HCT116 (cell line): ENCODE measurements at regions of chr11 and their contacts with region 1.

Region 1: DNA sequence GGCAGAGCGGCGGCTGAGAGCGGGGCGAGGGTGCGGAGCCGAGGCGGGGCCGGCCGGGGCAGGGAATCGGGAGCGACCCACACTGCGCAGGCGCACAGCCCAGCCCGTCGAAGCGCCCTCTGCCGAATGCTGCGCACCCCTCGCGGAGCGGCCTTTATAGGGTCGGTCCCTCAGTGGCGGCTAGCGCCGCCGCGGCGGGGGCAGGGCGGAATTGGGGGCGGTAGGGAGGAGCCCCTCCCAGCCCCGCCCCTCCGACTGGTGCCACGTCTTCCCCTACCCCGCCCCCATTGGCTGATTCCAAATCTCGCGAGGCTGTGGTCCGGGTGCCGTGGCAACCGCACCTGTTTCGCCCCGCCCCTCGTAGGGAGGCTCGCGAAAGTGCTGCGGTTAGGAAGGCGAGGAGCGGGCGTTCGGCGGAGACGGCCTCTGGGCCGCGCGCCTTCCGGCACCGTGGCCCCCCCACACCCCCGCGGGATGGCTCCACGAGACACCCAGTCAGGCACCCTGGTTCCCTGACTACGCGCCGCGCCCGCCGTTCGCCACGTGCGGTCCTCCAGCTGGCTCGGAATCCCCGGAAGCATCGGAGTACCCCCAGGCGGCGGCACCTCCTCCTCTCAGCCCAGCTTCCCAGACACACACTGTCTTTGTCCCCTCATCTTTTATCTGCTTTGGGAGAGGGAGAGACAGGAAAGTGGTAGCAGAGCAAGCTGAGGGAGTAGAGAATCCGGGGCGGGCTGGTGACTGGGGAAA is at the start of gene EHD1:
- DNase-seq: peak; percentile 92
- ATAC-seq: peak; percentile 88
- H3K4me3 ChIP-seq: peak within 1 kb of the TSS; percentile 95 to 99
- H3K27ac ChIP-seq: peak within 1 kb of the TSS; percentile 84
- H3K4me1 ChIP-seq: peaks cover 22 to 33% of the 10 kb centered on the region in 2 experiments
- H3K27me3 ChIP-seq: no peaks in the 10 kb centered on the region
- CTCF ChIP-seq: peak; percentile 34 to 52 (median 36); a peak in 5 of 6 replicates
- POLR2A ChIP-seq: peak; percentile 89
- RAD21 ChIP-seq: no peak; the same call in none of the 2 replicates
- total RNA-seq, gene EHD1: 48.1 TPM

Region 2: GRCh38 chr11:64854534-64855429 is 23.9 kb before region 1 on chr11:
- CTCF ChIA-PET with region 1: no interaction called
- POLR2A ChIA-PET with region 1: interaction called, 56 read pairs
- RAD21 ChIA-PET with region 1: interaction called in 1 of 2 experiments, 3 read pairs
- intact Hi-C with region 1: no loop called
- DNase-seq: peak; percentile 91
- ATAC-seq: peak; percentile 84
- H3K4me3 ChIP-seq: peak overlapping the region; percentile 26 to 50
- H3K27ac ChIP-seq: peak overlapping the region; percentile 99
- H3K4me1 ChIP-seq: peaks cover 74 to 93% of the 10 kb centered on the region in 2 experiments
- H3K27me3 ChIP-seq: no peaks in the 10 kb centered on the region
- CTCF ChIP-seq: no peak
- POLR2A ChIP-seq: no peak
- RAD21 ChIP-seq: no peak

Region 3: DNA sequence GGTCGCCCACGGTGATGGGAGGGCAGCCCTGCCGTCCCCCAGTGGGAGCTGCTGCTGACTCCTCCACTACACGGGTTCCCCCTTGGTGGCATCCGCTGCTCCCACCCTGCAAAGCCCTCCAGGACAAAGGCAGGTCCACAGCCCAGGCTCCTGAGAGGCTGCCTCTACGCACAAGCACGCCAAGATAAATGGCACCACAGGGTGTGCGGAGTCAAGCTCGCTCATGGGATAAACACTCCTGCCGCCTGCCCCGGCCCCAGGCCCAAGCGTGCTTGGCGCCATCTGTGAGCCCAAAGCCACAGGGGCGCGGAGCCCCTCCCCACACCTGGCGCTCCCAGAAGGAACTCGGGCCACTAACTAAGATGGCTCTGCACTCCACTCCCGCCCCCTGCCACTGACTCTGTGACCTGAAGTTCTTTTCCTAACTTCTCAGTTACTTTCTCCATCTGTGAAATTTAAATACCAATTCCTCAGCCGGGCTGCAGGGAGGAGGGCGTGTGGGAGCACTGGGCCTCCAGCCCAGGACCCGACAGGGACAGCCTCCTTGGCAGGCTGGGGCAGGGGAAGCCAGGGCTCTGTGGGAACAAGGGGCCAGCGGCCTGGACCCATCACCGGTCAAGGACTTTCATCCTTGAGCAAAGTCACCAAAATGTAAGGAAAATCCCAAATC is 15.1 kb before region 1 on chr11:
- CTCF ChIA-PET with region 1: interaction called, 3 read pairs
- POLR2A ChIA-PET with region 1: interaction called, 56 read pairs
- RAD21 ChIA-PET with region 1: no interaction called
- intact Hi-C with region 1: no loop called
- DNase-seq: no peak
- ATAC-seq: no peak
- H3K4me3 ChIP-seq: no peak overlapping the region
- H3K27ac ChIP-seq: peak overlapping the region; percentile 20; the same call in 1 of the 2 replicates
- H3K4me1 ChIP-seq: peaks cover 7 to 74% of the 10 kb centered on the region in 2 experiments
- H3K27me3 ChIP-seq: no peaks in the 10 kb centered on the region
- CTCF ChIP-seq: no peak
- POLR2A ChIP-seq: no peak
- RAD21 ChIP-seq: no peak

Region 4: DNA sequence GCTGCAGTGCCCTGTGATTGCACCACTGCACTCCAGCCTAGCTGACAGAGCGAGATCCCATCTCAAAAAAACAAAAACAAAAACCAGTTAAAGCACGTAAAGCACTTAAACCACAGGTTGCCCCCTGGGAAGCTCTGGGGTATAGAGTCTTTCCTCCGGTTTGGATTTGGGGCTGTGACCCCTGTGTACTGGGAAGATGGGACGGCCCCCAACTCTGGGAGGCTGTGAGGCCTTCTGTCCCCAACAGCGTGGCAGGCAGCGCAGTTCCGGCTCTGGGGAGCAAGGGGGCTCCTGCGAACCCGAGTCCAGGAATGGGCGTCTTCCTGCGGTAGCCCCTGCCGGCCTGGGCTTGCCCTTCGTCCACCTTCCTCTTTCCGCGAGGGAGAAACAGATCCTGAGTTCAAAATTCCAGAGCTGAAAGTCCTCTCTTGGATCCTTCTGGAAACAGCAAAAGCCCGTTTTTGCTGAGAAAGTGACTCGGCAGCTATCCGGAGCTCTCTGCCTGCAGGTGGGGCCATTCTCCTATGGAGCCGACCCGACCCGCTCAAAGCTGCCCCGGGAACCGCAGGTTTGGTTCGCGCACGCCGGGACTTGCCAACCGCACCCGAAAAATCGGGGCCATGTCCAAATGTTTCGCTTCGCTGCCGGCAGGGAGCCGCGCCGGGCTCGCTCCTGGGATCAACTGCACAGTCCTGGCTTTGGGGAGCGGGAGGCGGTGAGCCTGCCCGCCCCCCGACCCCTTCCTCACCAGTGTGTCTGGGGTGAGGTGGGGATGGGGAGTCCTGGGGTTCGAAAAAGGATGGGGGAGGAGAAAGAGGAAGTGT is 346.8 kb after region 1 on chr11:
- CTCF ChIA-PET with region 1: no interaction called
- POLR2A ChIA-PET with region 1: no interaction called
- RAD21 ChIA-PET with region 1: no interaction called
- intact Hi-C with region 1: no loop called
- DNase-seq: no peak
- ATAC-seq: peak; percentile 79
- H3K4me3 ChIP-seq: no peak overlapping the region
- H3K27ac ChIP-seq: peak overlapping the region; percentile 56
- H3K4me1 ChIP-seq: peaks cover 13 to 18% of the 10 kb centered on the region in 2 experiments
- H3K27me3 ChIP-seq: no peaks in the 10 kb centered on the region
- CTCF ChIP-seq: peak; percentile 28 to 42 (median 32); a peak in 3 of 6 replicates
- POLR2A ChIP-seq: no peak
- RAD21 ChIP-seq: peak; percentile 31; the same call in 1 of the 2 replicates